ENCODE measurements at regions of chr1 and their contacts with region 1.

Region 1: DNA sequence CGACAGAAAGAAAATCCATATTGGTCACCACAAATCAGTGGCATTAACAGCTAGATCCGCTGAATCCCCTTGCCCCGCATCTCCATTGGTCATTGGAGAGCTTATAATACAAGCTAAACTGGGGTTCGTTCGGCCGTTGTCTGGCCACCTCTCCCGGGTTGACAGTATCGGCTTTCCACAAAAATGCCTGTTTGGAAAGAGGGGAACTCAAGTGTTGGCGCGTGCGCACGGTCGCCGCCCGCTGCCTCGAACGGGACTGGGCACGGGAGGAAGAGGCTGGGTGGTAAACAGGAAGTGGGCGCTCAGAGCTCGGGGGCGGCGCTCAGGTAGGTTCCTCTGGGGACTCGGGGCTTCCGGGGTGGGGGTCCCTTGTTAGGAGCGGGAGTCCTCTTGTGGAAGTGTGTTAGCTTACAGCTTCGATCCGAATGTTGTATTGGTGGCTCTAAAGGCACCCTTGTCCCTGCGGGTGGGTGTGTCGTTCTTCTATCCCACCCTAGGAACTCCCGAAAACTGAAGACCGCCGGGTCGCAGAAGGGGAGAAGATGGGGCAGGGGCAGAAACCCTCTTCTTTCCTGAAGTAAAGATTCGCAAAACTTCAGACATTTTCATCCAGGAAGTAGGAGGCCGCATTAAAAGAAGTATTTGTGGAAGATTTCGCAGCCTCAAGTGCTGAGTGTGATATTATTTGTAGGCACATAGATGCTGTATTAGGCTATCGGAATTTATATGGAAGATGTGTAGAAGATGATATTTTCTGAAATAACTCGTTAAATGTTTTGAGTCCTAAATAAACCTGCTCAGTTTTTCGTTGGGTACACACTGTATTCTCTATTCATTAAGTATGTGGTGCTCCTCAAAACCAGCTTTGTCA is 962 bp downstream of the BROX start:
- DNase-seq: peak; percentile 99
- ATAC-seq: peak; percentile 63
- H3K4me3 ChIP-seq: peak overlapping the region; percentile 79
- H3K27ac ChIP-seq: peak overlapping the region; percentile 78
- H3K4me1 ChIP-seq: peaks cover 19% of the 10 kb centered on the region
- H3K27me3 ChIP-seq: no peaks in the 10 kb centered on the region
- CTCF ChIP-seq: no peak

Region 2: DNA sequence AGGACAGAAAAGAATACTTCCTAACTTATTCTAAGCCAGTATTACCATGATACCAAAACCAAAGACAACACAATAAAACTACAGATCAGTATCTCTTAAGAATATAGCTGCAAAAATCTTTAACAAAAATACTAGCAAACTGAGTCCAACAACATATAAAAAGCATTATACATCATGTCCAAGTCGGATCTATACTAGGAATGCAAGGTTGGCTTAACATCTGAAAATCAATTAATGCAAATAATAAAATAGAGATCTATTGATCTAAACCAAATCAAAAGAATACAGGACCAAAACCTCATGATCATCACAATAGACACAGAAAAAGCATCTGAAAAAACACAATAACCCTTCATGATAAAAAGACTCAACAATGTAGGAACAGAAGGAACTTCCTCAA is 142.5 kb before region 1 on chr1:
- CTCF ChIA-PET with region 1: no interaction called
- POLR2A ChIA-PET with region 1: no interaction called
- intact Hi-C with region 1: no loop called
- DNase-seq: no peak
- ATAC-seq: no peak
- H3K4me3 ChIP-seq: no peak overlapping the region
- H3K27ac ChIP-seq: no peak overlapping the region
- H3K4me1 ChIP-seq: no peaks in the 10 kb centered on the region
- H3K27me3 ChIP-seq: no peaks in the 10 kb centered on the region
- CTCF ChIP-seq: no peak

Region 3: DNA sequence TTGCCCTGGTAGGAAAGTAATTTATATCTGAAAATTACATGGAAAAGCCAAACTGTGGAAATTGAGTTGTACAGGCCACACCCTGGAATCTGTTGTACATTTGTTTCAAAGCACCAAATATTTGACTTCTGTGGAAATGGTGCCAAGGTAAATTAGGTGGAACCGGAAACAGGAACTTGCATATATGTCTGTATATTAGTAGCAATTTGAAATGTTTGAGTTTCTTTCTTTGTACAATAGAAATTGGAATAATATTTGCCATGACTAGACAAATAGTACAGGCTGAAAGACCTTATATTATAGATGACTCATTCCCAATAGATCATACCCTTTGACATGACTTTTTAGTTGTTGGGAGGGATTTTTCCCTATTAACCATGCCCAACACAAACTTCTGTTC is 113.0 kb before region 1 on chr1:
- CTCF ChIA-PET with region 1: no interaction called
- POLR2A ChIA-PET with region 1: no interaction called
- intact Hi-C with region 1: loop called (anchors 5 kb)
- DNase-seq: peak; percentile 92
- ATAC-seq: peak; percentile 87
- H3K4me3 ChIP-seq: peak overlapping the region; percentile 1; the same call in 1 of the 2 replicates
- H3K27ac ChIP-seq: peak overlapping the region; percentile 70
- H3K4me1 ChIP-seq: peaks cover 32% of the 10 kb centered on the region
- H3K27me3 ChIP-seq: no peaks in the 10 kb centered on the region
- CTCF ChIP-seq: no peak

Region 4: DNA sequence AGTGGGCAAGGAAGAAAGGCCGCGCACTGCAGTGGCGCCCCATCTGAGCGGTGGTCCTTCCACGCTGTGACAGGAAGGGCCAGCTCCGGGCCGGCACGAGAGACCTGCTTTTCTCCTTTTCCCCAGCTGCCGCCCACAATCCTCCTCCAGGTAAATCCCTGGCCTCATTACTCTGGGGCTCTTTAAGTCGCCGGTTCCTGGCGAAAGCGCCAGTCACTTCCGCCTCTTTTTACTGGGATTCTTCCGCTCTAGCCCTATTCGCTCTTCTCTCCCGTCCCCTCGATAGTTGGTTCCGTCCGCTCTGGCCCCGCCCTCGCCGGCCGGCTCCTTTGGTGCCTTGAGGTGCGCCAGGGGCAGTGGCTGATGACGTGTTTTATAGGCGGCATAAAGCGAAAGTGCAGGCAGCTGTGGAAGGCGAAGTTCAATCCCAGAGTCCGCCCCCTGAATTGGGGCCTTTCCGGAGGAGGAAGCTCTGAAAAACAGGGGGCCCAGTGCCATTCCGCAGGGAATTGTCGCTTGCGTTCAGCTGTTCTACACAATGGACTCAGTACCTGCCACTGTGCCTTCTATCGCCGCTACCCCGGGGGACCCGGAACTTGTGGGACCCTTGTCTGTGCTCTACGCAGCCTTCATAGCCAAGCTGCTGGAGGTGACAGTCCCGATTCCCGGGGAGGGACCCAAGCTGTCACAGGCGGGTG is 69.2 kb before region 1 on chr1:
- CTCF ChIA-PET with region 1: interaction called, 4 read pairs
- POLR2A ChIA-PET with region 1: no interaction called
- intact Hi-C with region 1: loop called (anchors 2 kb)
- DNase-seq: peak; percentile 100
- ATAC-seq: peak; percentile 93
- H3K4me3 ChIP-seq: peak overlapping the region; percentile 89
- H3K27ac ChIP-seq: peak overlapping the region; percentile 77
- H3K4me1 ChIP-seq: peaks cover 32% of the 10 kb centered on the region
- H3K27me3 ChIP-seq: no peaks in the 10 kb centered on the region
- CTCF ChIP-seq: no peak

Region 5: GRCh38 chr1:222786121-222786520 is 72.8 kb after region 1 on chr1:
- CTCF ChIA-PET with region 1: no interaction called
- POLR2A ChIA-PET with region 1: no interaction called
- intact Hi-C with region 1: no loop called
- DNase-seq: peak; percentile 62
- ATAC-seq: peak; percentile 16
- H3K4me3 ChIP-seq: no peak overlapping the region
- H3K27ac ChIP-seq: no peak overlapping the region
- H3K4me1 ChIP-seq: peaks cover 24% of the 10 kb centered on the region
- H3K27me3 ChIP-seq: no peaks in the 10 kb centered on the region
- CTCF ChIP-seq: no peak